Caco-2 (cell line): ENCODE measurements at regions of chr1 and their contacts with region 1.

Region 1: DNA sequence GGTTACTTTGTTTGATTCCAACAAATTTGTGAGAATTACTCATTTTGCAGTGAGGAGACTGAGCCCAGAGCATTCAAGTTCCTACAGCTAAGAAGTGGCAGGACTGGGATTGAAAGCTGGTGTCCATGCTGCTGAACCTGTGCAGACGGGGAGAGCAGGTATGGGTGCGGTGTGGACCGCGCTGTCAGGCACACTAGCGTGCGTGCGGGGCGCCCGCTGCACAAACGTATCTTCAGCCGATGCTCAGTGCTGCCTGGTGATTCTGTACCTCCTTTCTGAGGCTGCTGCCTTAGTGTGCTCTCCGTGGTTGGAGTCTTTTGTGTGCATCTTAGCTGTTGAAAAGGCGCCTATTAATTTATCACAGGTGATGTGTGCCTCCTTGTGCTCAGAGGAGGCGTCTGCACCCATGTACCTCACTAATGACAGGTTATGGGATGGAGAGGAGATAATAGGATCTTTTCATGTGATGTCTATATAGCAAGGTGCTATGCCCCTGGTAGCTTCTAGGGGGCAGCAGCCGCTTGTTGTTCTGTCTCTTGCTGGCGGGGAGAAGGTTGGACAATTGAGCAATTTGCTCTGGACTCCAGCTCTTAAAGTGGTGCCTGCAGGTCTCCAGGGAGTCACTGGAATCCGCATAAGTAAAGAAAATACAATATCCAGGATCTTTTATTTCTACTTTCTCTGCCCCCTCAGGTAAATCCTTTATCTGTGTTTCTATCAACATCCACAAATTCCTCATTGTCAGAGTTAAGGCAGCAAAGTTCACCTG is 32.5 kb downstream of the PEX14 start:
- DNase-seq: peak; percentile 81 to 84
- H3K4me3 ChIP-seq: no peak overlapping the region
- H3K4me3 Mint-ChIP-seq: no peak overlapping the region
- H3K27ac Mint-ChIP-seq: no peak overlapping the region
- H3K4me1 ChIP-seq: peaks cover 50% of the 10 kb centered on the region
- H3K4me1 Mint-ChIP-seq: peaks cover 26% of the 10 kb centered on the region
- H3K27me3 ChIP-seq: no peaks in the 10 kb centered on the region
- H3K27me3 Mint-ChIP-seq: no peaks in the 10 kb centered on the region
- CTCF ChIP-seq: peak; percentile 70 to 75

Region 2: GRCh38 chr1:10598389-10598702 is 91.1 kb after region 1 on chr1:
- CTCF ChIA-PET with region 1: no interaction called
- POLR2A ChIA-PET with region 1: interaction called, 3 read pairs
- intact Hi-C with region 1: loop called (anchors 5 kb)
- DNase-seq: peak in 1 of 2 experiments; percentile 22
- H3K4me3 ChIP-seq: peak overlapping the region; percentile 47
- H3K4me3 Mint-ChIP-seq: peak overlapping the region; percentile 86
- H3K27ac Mint-ChIP-seq: peak overlapping the region; percentile 96
- H3K4me1 ChIP-seq: peaks cover 63% of the 10 kb centered on the region
- H3K4me1 Mint-ChIP-seq: no peaks in the 10 kb centered on the region
- H3K27me3 ChIP-seq: no peaks in the 10 kb centered on the region
- H3K27me3 Mint-ChIP-seq: no peaks in the 10 kb centered on the region
- CTCF ChIP-seq: no peak

Region 3: GRCh38 chr1:10635085-10635896 is 128.0 kb after region 1 on chr1:
- CTCF ChIA-PET with region 1: interaction called, 3 read pairs
- POLR2A ChIA-PET with region 1: no interaction called
- intact Hi-C with region 1: loop called (anchors 10 kb)
- DNase-seq: no peak
- H3K4me3 ChIP-seq: no peak overlapping the region
- H3K4me3 Mint-ChIP-seq: no peak overlapping the region
- H3K27ac Mint-ChIP-seq: no peak overlapping the region
- H3K4me1 ChIP-seq: no peaks in the 10 kb centered on the region
- H3K4me1 Mint-ChIP-seq: no peaks in the 10 kb centered on the region
- H3K27me3 ChIP-seq: no peaks in the 10 kb centered on the region
- H3K27me3 Mint-ChIP-seq: no peaks in the 10 kb centered on the region
- CTCF ChIP-seq: no peak

Region 4: GRCh38 chr1:10694633-10695627 is 187.6 kb after region 1 on chr1:
- CTCF ChIA-PET with region 1: no interaction called
- POLR2A ChIA-PET with region 1: no interaction called
- intact Hi-C with region 1: loop called (anchors 10 kb)
- DNase-seq: peak; percentile 91
- H3K4me3 ChIP-seq: peak overlapping the region; percentile 23
- H3K4me3 Mint-ChIP-seq: peak overlapping the region; percentile 68
- H3K27ac Mint-ChIP-seq: no peak overlapping the region
- H3K4me1 ChIP-seq: peaks cover 12% of the 10 kb centered on the region
- H3K4me1 Mint-ChIP-seq: peaks cover 10% of the 10 kb centered on the region
- H3K27me3 ChIP-seq: no peaks in the 10 kb centered on the region
- H3K27me3 Mint-ChIP-seq: no peaks in the 10 kb centered on the region
- CTCF ChIP-seq: no peak

Region 5: GRCh38 chr1:10745886-10746455 is 238.7 kb after region 1 on chr1:
- CTCF ChIA-PET with region 1: no interaction called
- POLR2A ChIA-PET with region 1: no interaction called
- intact Hi-C with region 1: no loop called
- DNase-seq: no peak
- H3K4me3 ChIP-seq: no peak overlapping the region
- H3K4me3 Mint-ChIP-seq: no peak overlapping the region
- H3K27ac Mint-ChIP-seq: no peak overlapping the region
- H3K4me1 ChIP-seq: no peaks in the 10 kb centered on the region
- H3K4me1 Mint-ChIP-seq: no peaks in the 10 kb centered on the region
- H3K27me3 ChIP-seq: no peaks in the 10 kb centered on the region
- H3K27me3 Mint-ChIP-seq: no peaks in the 10 kb centered on the region
- CTCF ChIP-seq: no peak

Region 6: DNA sequence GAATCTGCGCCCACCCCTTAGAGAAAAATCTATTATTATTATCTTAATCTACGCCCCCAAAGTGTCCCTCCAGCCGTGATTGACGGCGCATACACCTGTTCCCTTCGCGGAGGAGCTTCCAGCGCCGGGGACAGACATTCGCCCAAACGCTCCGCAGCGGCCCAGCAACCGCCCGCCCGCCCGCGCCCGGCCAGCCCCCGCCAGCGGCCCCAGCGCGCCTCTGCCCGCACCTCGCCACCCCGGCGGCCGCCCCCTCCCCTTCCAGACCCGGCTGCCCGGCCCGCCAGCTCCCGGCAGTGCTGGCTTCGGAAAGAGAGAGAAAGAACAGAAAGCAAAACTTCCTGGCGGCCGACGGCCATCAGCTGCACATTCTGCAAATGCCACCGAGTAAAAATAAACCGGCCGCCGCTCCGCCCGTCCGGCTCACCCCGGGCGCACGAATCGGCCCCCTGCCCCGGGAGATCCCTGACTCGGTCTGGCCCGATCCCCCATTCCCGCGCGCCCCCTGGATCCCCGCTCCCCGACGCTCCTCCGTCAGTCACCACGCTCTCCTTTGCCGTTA is 287.5 kb after region 1 on chr1:
- CTCF ChIA-PET with region 1: interaction called, 3 read pairs
- POLR2A ChIA-PET with region 1: no interaction called
- intact Hi-C with region 1: loop called (anchors 5 kb)
- DNase-seq: peak in 1 of 2 experiments; percentile 18
- H3K4me3 ChIP-seq: peak overlapping the region; percentile 46
- H3K4me3 Mint-ChIP-seq: peak overlapping the region; percentile 91
- H3K27ac Mint-ChIP-seq: no peak overlapping the region
- H3K4me1 ChIP-seq: no peaks in the 10 kb centered on the region
- H3K4me1 Mint-ChIP-seq: peaks cover 7% of the 10 kb centered on the region
- H3K27me3 ChIP-seq: no peaks in the 10 kb centered on the region
- H3K27me3 Mint-ChIP-seq: peaks cover 17% of the 10 kb centered on the region
- CTCF ChIP-seq: no peak

Region 7: DNA sequence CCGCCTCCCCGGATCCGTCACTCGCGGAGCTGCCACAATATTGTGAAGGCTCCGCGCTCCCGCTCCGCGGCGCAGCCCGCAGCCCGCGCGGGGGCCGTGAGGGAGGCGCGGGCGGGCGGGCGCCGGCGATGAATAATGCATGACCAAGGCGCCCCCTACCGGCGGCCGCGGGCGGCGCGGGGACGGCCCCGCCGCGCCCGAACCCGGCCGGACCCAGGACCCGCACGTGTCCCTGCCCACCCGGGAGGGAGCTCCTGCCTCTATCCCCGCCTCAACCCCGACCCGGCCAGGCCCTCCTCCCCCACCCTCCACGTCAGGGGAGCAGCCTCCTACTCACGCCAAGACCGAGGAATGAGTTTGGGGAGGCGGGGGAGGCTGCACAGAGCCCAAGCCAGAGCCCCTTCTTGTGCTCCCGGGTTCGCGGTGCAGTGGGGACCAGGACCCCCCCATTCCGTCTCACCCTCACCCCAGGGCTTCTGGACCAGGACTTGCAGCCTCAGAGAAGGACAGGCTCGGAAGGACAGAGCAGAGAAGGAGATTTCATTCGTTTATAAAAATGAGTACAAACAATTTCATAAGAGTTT is 359.9 kb after region 1 on chr1:
- CTCF ChIA-PET with region 1: interaction called, 3 read pairs
- POLR2A ChIA-PET with region 1: no interaction called
- intact Hi-C with region 1: loop called (anchors 5 kb)
- DNase-seq: peak; percentile 52 to 80
- H3K4me3 ChIP-seq: peak overlapping the region; percentile 44
- H3K4me3 Mint-ChIP-seq: peak overlapping the region; percentile 67
- H3K27ac Mint-ChIP-seq: peak overlapping the region; percentile 45
- H3K4me1 ChIP-seq: peaks cover 14% of the 10 kb centered on the region
- H3K4me1 Mint-ChIP-seq: peaks cover 5% of the 10 kb centered on the region
- H3K27me3 ChIP-seq: no peaks in the 10 kb centered on the region
- H3K27me3 Mint-ChIP-seq: peaks cover 17% of the 10 kb centered on the region
- CTCF ChIP-seq: peak; percentile 9 to 80

Region 8: DNA sequence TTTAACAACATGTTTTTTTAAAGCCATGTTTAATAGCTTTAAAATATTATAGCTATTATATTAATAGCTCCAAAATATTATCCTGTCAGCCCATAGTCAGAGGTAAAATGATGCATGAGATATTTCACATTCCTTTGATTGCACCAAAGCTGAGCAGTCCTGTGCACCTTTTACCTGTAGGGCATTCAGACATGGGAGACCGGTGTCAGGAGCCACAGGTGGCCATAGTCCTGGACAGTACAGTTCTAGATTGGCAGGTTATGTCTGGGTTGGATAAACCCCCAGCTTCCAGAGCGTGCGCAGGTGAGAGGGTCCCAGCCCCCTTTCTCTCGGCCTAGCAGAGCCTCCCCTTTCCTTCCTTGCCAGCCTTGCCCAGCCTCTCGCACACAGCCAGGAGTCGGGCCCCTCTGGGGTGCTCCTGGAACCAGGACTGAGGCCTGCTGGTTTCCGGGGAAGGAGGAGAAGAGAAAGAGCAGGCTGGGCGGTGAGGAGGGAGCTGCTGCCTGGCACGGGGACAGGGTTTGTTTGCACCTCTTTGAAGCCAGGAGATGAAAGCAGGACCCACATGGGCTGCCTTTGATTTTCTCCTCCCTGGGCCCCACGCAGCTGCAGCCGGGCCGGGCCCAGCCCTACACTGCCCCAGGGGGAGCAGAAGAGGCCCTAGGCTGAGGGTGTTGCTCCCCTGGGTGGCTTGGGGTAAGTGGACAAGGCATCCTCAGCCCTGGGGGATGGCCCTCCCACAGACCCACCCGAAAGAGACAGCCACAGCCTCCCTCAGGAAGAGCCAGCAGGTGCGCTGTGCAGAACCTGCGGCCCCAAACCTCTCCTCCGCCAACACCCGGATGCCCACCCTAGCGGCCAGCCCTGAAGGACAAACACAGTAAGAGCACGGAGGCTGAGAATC is 430.0 kb after region 1 on chr1:
- CTCF ChIA-PET with region 1: no interaction called
- POLR2A ChIA-PET with region 1: no interaction called
- intact Hi-C with region 1: loop called (anchors 1 kb)
- DNase-seq: peak; percentile 68 to 73
- H3K4me3 ChIP-seq: no peak overlapping the region
- H3K4me3 Mint-ChIP-seq: no peak overlapping the region
- H3K27ac Mint-ChIP-seq: peak overlapping the region; percentile 55
- H3K4me1 ChIP-seq: peaks cover 10% of the 10 kb centered on the region
- H3K4me1 Mint-ChIP-seq: no peaks in the 10 kb centered on the region
- H3K27me3 ChIP-seq: no peaks in the 10 kb centered on the region
- H3K27me3 Mint-ChIP-seq: no peaks in the 10 kb centered on the region
- CTCF ChIP-seq: no peak

Region 9: DNA sequence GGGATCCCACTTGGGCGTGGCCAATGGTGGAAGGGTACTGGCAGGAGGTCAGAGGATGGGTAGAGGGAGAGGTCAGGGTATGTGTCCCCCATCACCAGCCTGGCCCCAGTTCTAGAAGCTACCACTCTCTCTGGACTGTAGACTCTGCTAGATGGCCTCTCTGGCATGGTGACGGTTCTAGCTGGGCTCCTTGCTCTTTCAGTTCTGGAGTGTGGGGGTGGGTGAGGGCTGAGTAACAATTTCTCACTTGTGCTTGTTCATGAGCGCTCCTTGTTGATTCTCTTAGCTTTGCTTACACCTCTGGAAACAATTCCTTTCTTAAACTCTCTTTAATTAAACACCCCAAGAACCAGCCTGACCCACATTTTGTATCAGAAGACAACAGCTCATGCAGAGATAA is 617.7 kb after region 1 on chr1:
- CTCF ChIA-PET with region 1: no interaction called
- POLR2A ChIA-PET with region 1: no interaction called
- intact Hi-C with region 1: no loop called
- DNase-seq: no peak
- H3K4me3 ChIP-seq: no peak overlapping the region
- H3K4me3 Mint-ChIP-seq: no peak overlapping the region
- H3K27ac Mint-ChIP-seq: no peak overlapping the region
- H3K4me1 ChIP-seq: no peaks in the 10 kb centered on the region
- H3K4me1 Mint-ChIP-seq: no peaks in the 10 kb centered on the region
- H3K27me3 ChIP-seq: no peaks in the 10 kb centered on the region
- H3K27me3 Mint-ChIP-seq: no peaks in the 10 kb centered on the region
- CTCF ChIP-seq: no peak